ENCODE measurements at regions of chr11 and their contacts with region 1.

Region 1: DNA sequence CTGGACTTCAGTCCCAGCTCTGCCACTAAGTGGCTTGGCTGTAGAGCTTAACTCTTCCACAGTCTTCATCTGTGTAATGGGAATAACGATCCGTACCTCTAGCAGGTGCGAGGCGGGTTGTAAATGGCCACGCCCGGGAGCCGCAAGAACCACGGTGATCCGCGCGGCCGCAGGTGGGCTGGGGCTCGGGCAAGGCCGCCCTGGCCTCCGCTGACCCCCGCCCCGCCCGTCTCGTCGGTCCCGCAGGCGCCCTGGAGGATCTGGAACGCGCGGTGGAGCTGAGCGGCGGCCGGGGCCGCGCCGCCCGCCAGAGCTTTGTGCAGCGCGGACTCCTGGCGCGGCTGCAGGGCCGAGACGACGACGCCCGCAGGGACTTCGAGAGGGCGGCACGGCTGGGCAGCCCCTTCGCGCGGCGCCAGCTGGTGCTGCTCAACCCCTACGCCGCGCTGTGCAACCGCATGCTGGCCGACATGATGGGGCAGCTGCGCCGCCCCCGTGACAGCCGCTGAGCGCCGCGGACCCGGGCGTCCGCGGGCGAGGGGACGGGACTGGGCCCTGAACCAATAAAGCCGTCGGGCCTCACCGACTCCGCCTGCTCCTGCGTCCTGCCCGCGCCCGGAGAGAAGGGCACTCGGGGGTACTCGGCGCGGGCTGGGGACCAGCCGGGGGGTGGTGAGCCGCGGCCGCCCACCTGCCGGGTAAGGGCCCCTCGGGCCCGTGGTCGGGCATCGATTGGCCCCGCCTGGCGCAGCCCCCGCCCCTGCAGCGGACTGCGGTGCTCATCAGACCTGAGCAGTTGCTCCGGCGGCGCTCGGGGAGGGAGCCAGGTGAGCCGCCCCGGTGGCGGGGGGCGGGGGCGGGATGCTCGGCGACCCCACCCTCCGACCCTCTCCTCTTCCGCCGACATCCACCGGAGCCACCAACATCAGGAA is at the start of gene TMEM25:
- DNase-seq: peak; percentile 68 to 78 (median 72)
- H3K4me3 ChIP-seq: peak within 1 kb of the TSS; percentile 65 to 77
- H3K4me3 Mint-ChIP-seq: peak within 1 kb of the TSS; percentile 91 to 98 (median 93)
- H3K27ac ChIP-seq: peak within 1 kb of the TSS; percentile 65
- H3K27ac Mint-ChIP-seq: peak within 1 kb of the TSS; percentile 84 to 97 (median 92)
- H3K4me1 ChIP-seq: peaks cover 32% of the 10 kb centered on the region
- H3K4me1 Mint-ChIP-seq: peaks cover 19 to 47% (median 31%) of the 10 kb centered on the region in 4 donors
- H3K27me3 ChIP-seq: no peaks in the 10 kb centered on the region
- H3K27me3 Mint-ChIP-seq: no peaks in the 10 kb centered on the region
- total RNA-seq, gene TMEM25: 19.5 to 20.0 TPM

Region 2: DNA sequence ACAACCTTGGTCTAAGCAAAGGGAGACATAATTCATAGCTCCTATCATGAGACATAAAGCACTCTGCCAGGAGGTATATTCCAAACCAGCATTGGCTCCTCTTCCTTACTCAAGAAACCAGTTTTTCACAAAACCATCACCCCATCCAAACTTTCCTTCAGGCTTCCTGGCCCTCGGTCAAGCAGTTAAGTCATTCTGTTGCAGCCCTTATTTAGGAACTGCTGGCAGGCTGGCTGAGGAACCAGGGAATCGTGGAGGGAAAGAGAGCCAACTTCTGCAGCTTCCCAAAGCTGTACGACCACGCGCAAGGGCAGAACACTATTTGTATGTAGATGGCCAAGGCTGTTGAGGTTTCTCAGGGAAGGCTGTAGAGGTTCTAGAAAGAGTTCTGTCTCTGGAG is 34.4 kb after region 1 on chr11:
- CTCF ChIA-PET with region 1: no interaction called
- POLR2A ChIA-PET with region 1: no interaction called
- intact Hi-C with region 1: loop called (anchors 5 kb)
- DNase-seq: no peak
- H3K4me3 ChIP-seq: no peak overlapping the region
- H3K4me3 Mint-ChIP-seq: peak overlapping the region; percentile 50 to 90 (median 70)
- H3K27ac ChIP-seq: no peak overlapping the region
- H3K27ac Mint-ChIP-seq: peak overlapping the region; percentile 54 to 92 (median 82)
- H3K4me1 ChIP-seq: peaks cover 5% of the 10 kb centered on the region
- H3K4me1 Mint-ChIP-seq: peaks cover 12 to 20% (median 17%) of the 10 kb centered on the region in 4 donors
- H3K27me3 ChIP-seq: no peaks in the 10 kb centered on the region
- H3K27me3 Mint-ChIP-seq: no peaks in the 10 kb centered on the region